ENCODE measurements at regions of chr1 and their contacts with region 1.

Region 1: DNA sequence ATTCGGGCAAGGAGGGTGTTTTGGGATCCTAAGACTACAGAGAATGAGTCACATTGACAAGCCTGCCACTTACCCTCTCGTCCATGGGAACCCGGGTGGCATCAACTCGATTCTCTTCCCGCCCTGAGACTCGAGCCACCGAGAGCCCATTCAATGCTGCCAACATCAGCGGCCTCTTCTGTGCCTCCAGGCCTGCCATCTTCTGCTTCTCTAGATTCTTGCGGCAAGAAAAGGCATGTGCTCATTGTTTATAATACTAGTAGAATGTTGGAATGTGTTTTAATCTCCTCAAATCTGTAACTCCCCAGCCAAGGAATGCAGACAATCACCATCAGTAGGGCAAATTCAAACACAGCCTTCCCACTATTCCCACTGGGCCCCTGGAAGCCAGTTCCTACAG is 96.9 kb downstream of the SMYD2 start:
- DNase-seq: no peak
- H3K4me3 ChIP-seq: no peak overlapping the region
- H3K27ac ChIP-seq: peak overlapping the region in 2 of 4 donors; percentile 9 to 64
- H3K4me1 ChIP-seq: peaks cover 0 to 43% (median 34%) of the 10 kb centered on the region in 4 donors
- H3K27me3 ChIP-seq: no peaks in the 10 kb centered on the region
- CTCF ChIP-seq: no peak
- EP300 ChIP-seq: no peak
- POLR2A ChIP-seq: no peak

Region 2: GRCh38 chr1:214337511-214337910 is 40.4 kb before region 1 on chr1:
- intact Hi-C with region 1: loop called (anchors 5 kb)
- DNase-seq: no peak
- H3K4me3 ChIP-seq: peak overlapping the region in 2 of 4 donors; percentile 4 to 17
- H3K27ac ChIP-seq: peak overlapping the region; percentile 78 to 85 (median 80)
- H3K4me1 ChIP-seq: peaks cover 25 to 40% (median 36%) of the 10 kb centered on the region in 4 donors
- H3K27me3 ChIP-seq: no peaks in the 10 kb centered on the region
- CTCF ChIP-seq: no peak
- EP300 ChIP-seq: no peak
- POLR2A ChIP-seq: no peak

Measured in esophagus muscularis mucosa (tissue), 4 donors.